T-cell (primary cell): ENCODE measurements at regions of chr1 and their contacts with region 1.

Region 1: GRCh38 chr1:10575616-10576015 is 100.9 kb downstream of the PEX14 start:
- DNase-seq: no peak
- ATAC-seq: no peak
- H3K4me3 ChIP-seq: no peak overlapping the region
- H3K4me3 Mint-ChIP-seq: no peak overlapping the region
- H3K27ac ChIP-seq: no peak overlapping the region
- H3K27ac Mint-ChIP-seq: no peak overlapping the region
- H3K4me1 ChIP-seq: no peaks in the 10 kb centered on the region
- H3K4me1 Mint-ChIP-seq: no peaks in the 10 kb centered on the region
- H3K27me3 ChIP-seq: no peaks in the 10 kb centered on the region
- H3K27me3 Mint-ChIP-seq: no peaks in the 10 kb centered on the region

Region 2: DNA sequence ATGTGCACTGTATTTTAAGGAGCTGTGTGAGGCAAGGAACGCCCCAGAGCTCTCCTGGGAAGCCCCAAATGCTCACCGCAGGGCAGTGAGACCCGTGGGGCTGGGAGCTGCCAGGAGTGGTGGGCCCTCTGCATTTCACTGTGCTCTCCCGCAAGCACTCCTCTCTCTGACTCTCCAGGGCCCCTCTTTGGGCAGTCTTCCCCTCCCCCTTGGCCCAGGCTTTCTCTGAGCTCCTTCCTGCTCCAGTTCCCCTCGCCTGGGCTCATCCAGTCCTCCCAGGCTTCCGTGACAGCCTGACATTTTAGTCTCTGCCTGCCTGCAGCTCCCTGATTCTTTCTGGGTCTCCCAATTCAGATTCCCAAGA is 1632.1 kb before region 1 on chr1:
- CTCF ChIA-PET with region 1: no interaction called
- POLR2A ChIA-PET with region 1: interaction called in 1 of 2 experiments, 10 read pairs
- DNase-seq: no peak
- ATAC-seq: peak in 1 of 4 experiments; percentile 39
- H3K4me3 ChIP-seq: no peak overlapping the region
- H3K4me3 Mint-ChIP-seq: peak overlapping the region in 1 of 3 donors; percentile 59
- H3K27ac ChIP-seq: no peak overlapping the region
- H3K27ac Mint-ChIP-seq: peak overlapping the region; percentile 55 to 70
- H3K4me1 ChIP-seq: peaks cover 41 to 86% of the 10 kb centered on the region in 2 experiments
- H3K4me1 Mint-ChIP-seq: peaks cover 81 to 95% (median 93%) of the 10 kb centered on the region in 3 donors
- H3K27me3 ChIP-seq: no peaks in the 10 kb centered on the region
- H3K27me3 Mint-ChIP-seq: no peaks in the 10 kb centered on the region

Region 3: GRCh38 chr1:9942939-9943788 is 632.5 kb before region 1 on chr1 and contains the starts of genes LZIC and NMNAT1:
- CTCF ChIA-PET with region 1: interaction called in 1 of 2 experiments, 10 read pairs
- POLR2A ChIA-PET with region 1: no interaction called
- DNase-seq: peak; percentile 66 to 92 (median 82)
- ATAC-seq: peak; percentile 92 to 98 (median 96)
- H3K4me3 ChIP-seq: peak within 1 kb of the TSS; percentile 62 to 84
- H3K4me3 Mint-ChIP-seq: peak within 1 kb of the TSS; percentile 96 to 97 (median 97)
- H3K27ac ChIP-seq: peak within 1 kb of the TSS; percentile 80
- H3K27ac Mint-ChIP-seq: peak within 1 kb of the TSS; percentile 96 to 97
- H3K4me1 ChIP-seq: peaks cover 6 to 29% of the 10 kb centered on the region in 2 experiments
- H3K4me1 Mint-ChIP-seq: peaks cover 24 to 32% (median 24%) of the 10 kb centered on the region in 3 donors
- H3K27me3 ChIP-seq: no peaks in the 10 kb centered on the region
- H3K27me3 Mint-ChIP-seq: no peaks in the 10 kb centered on the region
- total RNA-seq, gene LZIC: 19.6 to 28.6 (median 22.0) TPM
- total RNA-seq, gene NMNAT1: 2.9 to 8.0 (median 7.1) TPM

Region 4: GRCh38 chr1:10615332-10615731 is 39.7 kb after region 1 on chr1:
- CTCF ChIA-PET with region 1: no interaction called
- POLR2A ChIA-PET with region 1: no interaction called
- DNase-seq: no peak
- ATAC-seq: no peak
- H3K4me3 ChIP-seq: no peak overlapping the region
- H3K4me3 Mint-ChIP-seq: no peak overlapping the region
- H3K27ac ChIP-seq: no peak overlapping the region
- H3K27ac Mint-ChIP-seq: no peak overlapping the region
- H3K4me1 ChIP-seq: no peaks in the 10 kb centered on the region
- H3K4me1 Mint-ChIP-seq: no peaks in the 10 kb centered on the region
- H3K27me3 ChIP-seq: no peaks in the 10 kb centered on the region
- H3K27me3 Mint-ChIP-seq: no peaks in the 10 kb centered on the region